Right ventricle myocardium inferior (tissue), 1 donor: ENCODE measurements at regions of chr4 and their contacts with region 1.

Region 1: GRCh38 chr4:113394730-113395530 is 345.5 kb downstream of the ANK2 start:
- DNase-seq: no peak
- ATAC-seq: peak; percentile 95

Region 2: DNA sequence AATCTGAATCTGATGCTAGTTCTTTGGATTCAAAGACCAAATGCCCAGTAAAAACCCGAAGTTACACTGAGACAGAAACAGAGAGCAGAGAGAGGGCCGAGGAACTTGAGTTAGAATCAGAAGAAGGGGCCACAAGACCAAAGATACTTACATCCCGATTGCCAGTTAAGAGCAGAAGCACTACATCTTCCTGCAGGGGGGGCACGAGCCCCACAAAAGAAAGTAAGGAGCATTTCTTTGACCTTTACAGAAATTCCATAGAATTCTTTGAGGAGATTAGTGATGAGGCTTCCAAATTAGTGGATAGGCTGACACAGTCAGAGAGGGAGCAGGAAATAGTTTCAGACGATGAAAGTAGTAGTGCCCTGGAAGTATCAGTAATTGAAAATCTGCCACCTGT is 36.1 kb before region 1 on chr4:
- intact Hi-C with region 1: no loop called
- DNase-seq: no peak
- ATAC-seq: no peak

Region 3: DNA sequence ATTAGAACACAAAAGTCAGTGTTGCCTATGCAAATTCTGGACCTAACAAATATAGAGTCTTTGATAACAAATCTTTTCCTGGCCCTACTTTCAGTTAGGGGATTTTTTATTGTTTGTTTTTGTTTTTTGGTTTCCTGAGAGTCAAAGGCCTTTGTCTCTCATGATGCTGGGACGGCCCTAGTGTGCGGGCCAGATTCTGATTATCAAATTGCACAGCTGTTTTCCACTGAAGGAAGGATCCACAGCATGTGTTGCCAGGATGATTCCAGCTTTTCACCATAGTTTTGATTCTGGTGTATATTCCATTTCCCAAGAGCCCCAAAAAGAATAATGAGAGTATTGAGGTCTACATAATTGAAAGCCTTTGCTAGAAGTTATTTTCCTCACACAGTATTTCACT is 118.5 kb after region 1 on chr4:
- intact Hi-C with region 1: loop called (anchors 10 kb)
- DNase-seq: no peak
- ATAC-seq: no peak

Region 4: DNA sequence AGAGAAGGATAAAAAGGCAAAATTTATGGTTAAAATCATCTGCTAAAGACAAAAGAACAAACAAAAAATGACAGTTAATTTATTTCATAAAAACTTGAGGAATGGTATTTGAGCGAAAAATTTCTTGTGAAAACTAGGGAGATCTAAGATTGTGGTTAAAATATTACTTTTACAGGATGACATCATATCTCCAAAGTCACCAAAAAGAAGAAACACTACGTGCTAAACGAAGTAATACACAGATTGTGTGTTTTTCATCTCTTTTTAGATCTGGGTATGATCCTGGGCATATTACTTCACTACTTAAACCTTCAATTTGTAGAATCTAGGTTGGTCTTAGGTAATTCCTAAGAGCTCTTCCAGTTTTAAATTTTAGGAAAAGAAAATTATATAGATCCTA is 258.9 kb after region 1 on chr4:
- intact Hi-C with region 1: loop called (anchors 5 kb)
- DNase-seq: no peak
- ATAC-seq: no peak

Region 5: DNA sequence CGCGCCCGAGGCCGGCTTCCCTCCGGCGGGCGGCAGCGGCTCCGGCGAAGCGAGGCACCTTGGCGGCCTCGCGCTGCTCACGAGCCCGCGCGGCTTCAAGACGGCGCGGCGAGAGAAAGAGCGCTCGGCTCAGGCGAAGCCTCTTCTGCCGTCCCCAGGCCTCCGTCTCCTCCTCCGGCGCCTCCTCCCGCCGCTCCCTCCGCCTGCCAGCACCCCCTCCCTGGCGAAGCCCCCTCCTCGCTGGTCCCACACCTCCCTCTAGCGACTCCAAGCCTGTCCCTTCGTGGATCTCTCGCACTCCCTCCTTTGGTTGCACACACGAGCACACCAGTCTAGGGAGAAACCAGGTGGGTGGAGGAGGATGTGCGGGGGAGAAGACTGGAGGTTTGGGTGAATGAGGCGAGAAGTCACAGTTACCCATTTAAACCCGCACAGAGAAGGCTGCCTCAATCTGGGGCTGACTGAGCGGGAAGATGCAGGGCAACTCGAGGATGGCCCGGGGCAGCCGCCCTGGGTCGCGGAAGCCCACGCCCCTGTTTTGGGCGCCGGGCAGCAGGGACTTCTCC is 366.8 kb after region 1 on chr4 and contains the start of gene CAMK2D:
- intact Hi-C with region 1: loop called (anchors 5 kb)
- DNase-seq: peak; percentile 86
- ATAC-seq: peak; percentile 81
- total RNA-seq, gene CAMK2D: 214 TPM

Region 6: GRCh38 chr4:113893546-113893945 is 498.6 kb after region 1 on chr4:
- intact Hi-C with region 1: loop called (anchors 5 kb)
- DNase-seq: no peak
- ATAC-seq: no peak

Region 7: GRCh38 chr4:114072781-114073180 is 677.9 kb after region 1 on chr4:
- intact Hi-C with region 1: loop called (anchors 1 kb)
- DNase-seq: no peak
- ATAC-seq: no peak

Region 8: GRCh38 chr4:114386637-114387233 is 991.8 kb after region 1 on chr4:
- intact Hi-C with region 1: loop called (anchors 10 kb)
- DNase-seq: no peak
- ATAC-seq: no peak